Naive thymus-derived CD8-positive, alpha-beta T cell (primary cell): ENCODE measurements at regions of chr1 and their contacts with region 1.

Region 1: GRCh38 chr1:29181413-29182225 is at the start of gene SRSF4:
- DNase-seq: peak; percentile 96 to 99 (median 98)
- ATAC-seq: peak; percentile 89 to 91
- H3K4me3 Mint-ChIP-seq: peak within 1 kb of the TSS; percentile 89 to 96 (median 94)
- H3K27ac Mint-ChIP-seq: peak within 1 kb of the TSS; percentile 85 to 97 (median 96)
- H3K4me1 Mint-ChIP-seq: peaks cover 25 to 52% (median 45%) of the 10 kb centered on the region in 4 donors
- H3K27me3 Mint-ChIP-seq: no peaks in the 10 kb centered on the region
- polyA plus RNA-seq, gene SRSF4: 73.2 to 104 (median 81.5) TPM

Region 2: GRCh38 chr1:28505406-28506187 is 676.0 kb before region 1 on chr1 and contains the start of gene RCC1:
- POLR2A ChIA-PET with region 1: interaction called, 10 read pairs
- DNase-seq: peak; percentile 84 to 98 (median 95)
- ATAC-seq: peak; percentile 91 to 94
- H3K4me3 Mint-ChIP-seq: peak within 1 kb of the TSS; percentile 94 to 99 (median 98)
- H3K27ac Mint-ChIP-seq: peak within 1 kb of the TSS; percentile 97 to 100 (median 98)
- H3K4me1 Mint-ChIP-seq: peaks cover 15 to 52% (median 38%) of the 10 kb centered on the region in 4 donors
- H3K27me3 Mint-ChIP-seq: no peaks in the 10 kb centered on the region
- polyA plus RNA-seq, gene RCC1: 11.7 to 16.1 (median 12.2) TPM

Region 3: DNA sequence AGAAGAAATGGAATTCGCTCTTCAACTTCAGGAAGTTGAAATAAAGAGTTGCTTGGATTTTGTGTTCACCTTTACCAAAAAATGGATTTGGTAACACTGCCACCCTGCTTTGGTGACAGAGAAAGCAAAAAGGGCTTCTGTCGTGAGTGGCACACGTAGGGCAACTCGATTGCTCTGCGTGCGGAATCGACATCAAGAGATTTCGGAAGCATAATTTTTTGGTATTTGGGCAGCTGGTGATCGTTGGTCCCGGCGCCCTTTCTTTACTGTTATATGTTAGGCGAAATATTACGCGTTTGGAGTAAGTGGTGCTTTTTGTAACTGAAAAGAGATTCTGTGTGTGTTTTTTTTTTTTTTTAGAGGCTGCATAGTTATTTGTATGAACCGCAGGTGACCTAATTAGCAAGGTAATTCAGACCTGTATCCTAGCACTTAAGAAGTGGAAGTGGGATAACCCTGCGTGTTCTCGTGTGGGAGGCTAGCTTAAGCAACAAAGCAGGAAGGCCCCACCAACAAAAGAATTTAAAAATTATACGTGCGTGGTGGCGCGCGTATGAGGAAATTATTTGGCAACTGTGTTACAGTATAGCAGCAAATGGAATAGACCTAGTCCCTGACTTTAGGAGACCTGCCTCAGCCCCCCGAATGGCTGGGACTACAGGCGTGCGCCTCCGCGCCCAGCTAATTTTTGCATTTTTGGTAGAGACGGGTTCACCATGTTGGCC is 533.0 kb before region 1 on chr1 and contains the start of gene RNU11:
- POLR2A ChIA-PET with region 1: interaction called, 19 read pairs
- DNase-seq: peak; percentile 57 to 99 (median 88)
- ATAC-seq: peak; percentile 78 to 80
- H3K4me3 Mint-ChIP-seq: peak within 1 kb of the TSS; percentile 78 to 97 (median 91)
- H3K27ac Mint-ChIP-seq: peak within 1 kb of the TSS; percentile 98 to 100 (median 99)
- H3K4me1 Mint-ChIP-seq: peaks cover 16 to 38% (median 32%) of the 10 kb centered on the region in 4 donors
- H3K27me3 Mint-ChIP-seq: no peaks in the 10 kb centered on the region
- polyA plus RNA-seq, gene RNU11: not detected

Region 4: GRCh38 chr1:28736450-28737306 is 444.9 kb before region 1 on chr1 and contains the start of gene YTHDF2:
- POLR2A ChIA-PET with region 1: interaction called, 37 read pairs
- DNase-seq: peak; percentile 93 to 99 (median 98)
- ATAC-seq: peak; percentile 92 to 93
- H3K4me3 Mint-ChIP-seq: peak within 1 kb of the TSS; percentile 91 to 100 (median 96)
- H3K27ac Mint-ChIP-seq: peak within 1 kb of the TSS; percentile 93 to 99 (median 96)
- H3K4me1 Mint-ChIP-seq: peaks cover 10 to 43% (median 38%) of the 10 kb centered on the region in 4 donors
- H3K27me3 Mint-ChIP-seq: no peaks in the 10 kb centered on the region
- polyA plus RNA-seq, gene YTHDF2: 117 to 128 (median 118) TPM

Region 5: GRCh38 chr1:29171089-29171488 is 10.5 kb before region 1 on chr1:
- POLR2A ChIA-PET with region 1: interaction called, 15 read pairs
- DNase-seq: no peak
- ATAC-seq: peak; percentile 20 to 30
- H3K4me3 Mint-ChIP-seq: peak overlapping the region in 9 of 10 donors; percentile 31 to 78 (median 61)
- H3K27ac Mint-ChIP-seq: peak overlapping the region in 6 of 10 donors; percentile 15 to 69 (median 40)
- H3K4me1 Mint-ChIP-seq: peaks cover 33 to 75% (median 66%) of the 10 kb centered on the region in 4 donors
- H3K27me3 Mint-ChIP-seq: no peaks in the 10 kb centered on the region

Region 6: GRCh38 chr1:29245876-29246275 is 64.3 kb after region 1 on chr1:
- POLR2A ChIA-PET with region 1: no interaction called
- DNase-seq: no peak
- ATAC-seq: peak in 1 of 2 donors; percentile 36
- H3K4me3 Mint-ChIP-seq: no peak overlapping the region
- H3K27ac Mint-ChIP-seq: no peak overlapping the region
- H3K4me1 Mint-ChIP-seq: no peaks in the 10 kb centered on the region
- H3K27me3 Mint-ChIP-seq: peaks cover 5 to 49% (median 22%) of the 10 kb centered on the region in 5 donors